ENCODE measurements at regions of chr14 and their contacts with region 1.

Region 1: GRCh38 chr14:99971087-99971940 is 93.9 kb upstream of the EVL start:
- DNase-seq: peak; percentile 93
- H3K4me3 Mint-ChIP-seq: peak overlapping the region; percentile 64
- H3K27ac Mint-ChIP-seq: no peak overlapping the region
- H3K4me1 Mint-ChIP-seq: peaks cover 19% of the 10 kb centered on the region
- H3K27me3 Mint-ChIP-seq: peaks cover 40% of the 10 kb centered on the region

Region 2: GRCh38 chr14:99604283-99604765 is 367.0 kb before region 1 on chr14:
- intact Hi-C with region 1: loop called (anchors 5 kb)
- DNase-seq: peak; percentile 99
- H3K4me3 Mint-ChIP-seq: peak overlapping the region; percentile 84
- H3K27ac Mint-ChIP-seq: peak overlapping the region; percentile 91
- H3K4me1 Mint-ChIP-seq: peaks cover 22% of the 10 kb centered on the region
- H3K27me3 Mint-ChIP-seq: peaks cover 12% of the 10 kb centered on the region

Region 3: GRCh38 chr14:99982537-99983250 is 11.4 kb after region 1 on chr14:
- intact Hi-C with region 1: loop called (anchors 1 kb)
- DNase-seq: peak; percentile 89
- H3K4me3 Mint-ChIP-seq: no peak overlapping the region
- H3K27ac Mint-ChIP-seq: no peak overlapping the region
- H3K4me1 Mint-ChIP-seq: peaks cover 16% of the 10 kb centered on the region
- H3K27me3 Mint-ChIP-seq: no peaks in the 10 kb centered on the region

Measured in activated CD4-positive, alpha-beta T cell treated with anti-CD3 and anti-CD28 coated beads, Interleukin-2, amount 10 ng/mL, durations not matched to agents 24 days and 14 days (primary cell).